ENCODE measurements at regions of chr1 and their contacts with region 1.

Region 1: DNA sequence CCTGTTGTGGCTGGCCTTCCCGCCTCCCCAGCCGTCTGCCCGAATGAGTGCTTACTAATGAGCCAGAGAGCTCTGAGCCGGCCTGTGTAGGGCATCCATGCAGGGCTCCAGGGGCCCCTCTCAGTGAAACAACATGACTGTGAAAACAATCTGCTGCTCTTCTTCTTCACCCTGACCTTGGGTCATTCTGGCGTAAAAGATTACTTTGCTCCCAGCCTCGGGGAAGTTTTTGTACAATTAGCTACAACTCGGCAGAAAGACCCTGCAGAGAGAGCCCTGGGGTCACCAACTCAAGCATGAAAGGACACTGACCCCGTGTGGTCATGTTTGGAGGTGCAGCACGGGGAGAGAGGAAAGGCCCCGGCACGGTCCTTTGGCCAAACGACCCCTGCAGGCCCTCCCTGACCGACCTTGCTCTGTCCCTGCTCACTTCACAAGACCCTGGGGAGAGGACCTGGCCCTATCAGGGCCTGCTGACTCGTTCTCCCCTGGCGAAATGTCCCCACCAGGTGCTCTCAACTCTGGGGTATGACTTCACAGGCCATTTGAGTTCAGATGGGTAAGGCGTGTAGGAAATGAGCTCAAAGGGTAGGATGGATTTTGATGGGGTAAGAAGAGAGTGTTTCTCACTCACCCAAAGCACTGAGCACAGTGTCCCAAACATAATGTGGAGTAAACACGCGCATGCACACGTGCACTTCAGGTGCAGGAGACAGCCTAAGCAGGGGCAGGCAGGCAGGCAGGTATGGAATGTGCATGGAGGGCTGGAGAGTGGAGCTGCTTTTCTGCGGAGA is 22.9 kb upstream of the FAM20B start:
- DNase-seq: peak; percentile 80
- H3K4me3 Mint-ChIP-seq: no peak overlapping the region
- H3K27ac Mint-ChIP-seq: peak overlapping the region; percentile 1
- H3K4me1 Mint-ChIP-seq: peaks cover 4% of the 10 kb centered on the region
- H3K27me3 Mint-ChIP-seq: no peaks in the 10 kb centered on the region
- CTCF ChIP-seq: peak; percentile 100

Region 2: DNA sequence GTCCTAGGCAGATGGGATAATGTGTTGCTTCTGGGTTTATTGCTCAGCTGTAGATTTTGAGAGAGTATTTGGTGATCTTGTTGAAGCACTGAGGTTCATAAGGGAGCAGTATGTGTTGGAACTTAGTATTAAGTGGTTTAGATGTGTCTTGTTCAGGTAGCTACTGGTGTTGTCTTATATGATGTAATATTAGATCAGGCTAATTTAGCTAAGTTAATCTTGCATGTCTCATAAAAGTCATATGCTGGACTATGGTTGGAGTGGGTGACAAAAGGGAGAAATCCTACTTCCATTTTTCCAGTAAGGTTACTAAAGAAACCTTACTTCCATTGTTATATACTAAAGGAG is 702.4 kb before region 1 on chr1:
- CTCF ChIA-PET with region 1: interaction called, 20 read pairs
- POLR2A ChIA-PET with region 1: no interaction called
- intact Hi-C with region 1: no loop called
- DNase-seq: no peak
- H3K4me3 Mint-ChIP-seq: no peak overlapping the region
- H3K27ac Mint-ChIP-seq: peak overlapping the region; percentile 50
- H3K4me1 Mint-ChIP-seq: peaks cover 15% of the 10 kb centered on the region
- H3K27me3 Mint-ChIP-seq: no peaks in the 10 kb centered on the region
- CTCF ChIP-seq: no peak

Region 3: DNA sequence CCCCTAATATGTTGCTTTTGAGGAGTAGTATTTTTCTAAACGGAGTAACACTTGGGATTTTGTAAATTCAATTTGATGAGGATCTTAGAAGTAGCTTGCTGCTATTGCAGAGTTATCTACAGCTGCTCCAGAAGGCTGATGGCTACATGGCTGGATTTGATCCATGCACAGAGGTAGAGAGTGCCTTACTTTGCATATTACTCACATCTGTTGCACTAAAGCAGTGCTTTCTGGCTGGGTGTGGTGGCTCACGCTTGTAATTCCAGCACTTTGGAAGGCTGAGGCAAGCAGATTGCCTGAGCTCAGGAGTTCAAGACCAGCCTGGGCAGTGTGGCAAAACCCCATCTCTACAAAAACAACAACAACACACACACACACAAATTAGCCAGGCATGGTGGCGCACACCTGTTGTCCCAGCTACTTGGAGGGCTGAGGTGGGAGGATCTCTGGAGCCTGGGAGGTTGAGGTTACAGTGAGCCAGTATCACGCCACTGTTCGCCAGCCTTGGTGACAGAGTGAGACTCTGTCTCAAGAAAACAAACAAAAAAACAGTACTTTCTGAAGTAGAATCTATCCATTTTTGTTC is 253.1 kb before region 1 on chr1:
- CTCF ChIA-PET with region 1: interaction called, 87 read pairs
- POLR2A ChIA-PET with region 1: no interaction called
- intact Hi-C with region 1: no loop called
- DNase-seq: no peak
- H3K4me3 Mint-ChIP-seq: no peak overlapping the region
- H3K27ac Mint-ChIP-seq: no peak overlapping the region
- H3K4me1 Mint-ChIP-seq: peaks cover 7% of the 10 kb centered on the region
- H3K27me3 Mint-ChIP-seq: no peaks in the 10 kb centered on the region
- CTCF ChIP-seq: no peak

Region 4: GRCh38 chr1:178789201-178789600 is 213.5 kb before region 1 on chr1:
- CTCF ChIA-PET with region 1: interaction called, 93 read pairs
- POLR2A ChIA-PET with region 1: no interaction called
- intact Hi-C with region 1: no loop called
- DNase-seq: no peak
- H3K4me3 Mint-ChIP-seq: no peak overlapping the region
- H3K27ac Mint-ChIP-seq: no peak overlapping the region
- H3K4me1 Mint-ChIP-seq: peaks cover 7% of the 10 kb centered on the region
- H3K27me3 Mint-ChIP-seq: no peaks in the 10 kb centered on the region
- CTCF ChIP-seq: no peak

Region 5: GRCh38 chr1:178869119-178869697 is 133.5 kb before region 1 on chr1:
- CTCF ChIA-PET with region 1: interaction called, 16 read pairs
- POLR2A ChIA-PET with region 1: no interaction called
- intact Hi-C with region 1: no loop called
- DNase-seq: peak; percentile 4
- H3K4me3 Mint-ChIP-seq: no peak overlapping the region
- H3K27ac Mint-ChIP-seq: no peak overlapping the region
- H3K4me1 Mint-ChIP-seq: no peaks in the 10 kb centered on the region
- H3K27me3 Mint-ChIP-seq: no peaks in the 10 kb centered on the region
- CTCF ChIP-seq: no peak

Region 6: DNA sequence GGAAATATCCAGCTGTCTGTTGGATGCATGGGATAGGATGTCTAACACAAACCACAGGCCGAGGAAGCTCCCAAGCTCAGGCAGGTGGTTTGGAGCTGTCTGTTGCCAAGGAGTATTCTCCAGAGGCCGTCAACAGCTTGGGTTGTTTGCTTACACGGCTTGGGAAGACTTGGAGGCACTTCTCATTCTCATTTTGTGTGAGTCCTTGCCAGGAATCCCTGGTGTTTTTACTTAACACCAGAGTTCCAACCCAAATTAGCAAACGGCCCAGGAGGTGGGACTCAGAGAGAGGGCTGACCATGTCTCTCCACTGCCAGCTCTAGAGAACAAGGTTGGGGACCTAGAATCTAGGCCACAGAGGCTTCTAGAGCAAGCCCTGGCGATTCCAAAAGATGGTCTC is 49.7 kb before region 1 on chr1:
- CTCF ChIA-PET with region 1: interaction called, 19 read pairs
- POLR2A ChIA-PET with region 1: no interaction called
- intact Hi-C with region 1: no loop called
- DNase-seq: no peak
- H3K4me3 Mint-ChIP-seq: no peak overlapping the region
- H3K27ac Mint-ChIP-seq: no peak overlapping the region
- H3K4me1 Mint-ChIP-seq: peaks cover 6% of the 10 kb centered on the region
- H3K27me3 Mint-ChIP-seq: no peaks in the 10 kb centered on the region
- CTCF ChIP-seq: no peak

Region 7: DNA sequence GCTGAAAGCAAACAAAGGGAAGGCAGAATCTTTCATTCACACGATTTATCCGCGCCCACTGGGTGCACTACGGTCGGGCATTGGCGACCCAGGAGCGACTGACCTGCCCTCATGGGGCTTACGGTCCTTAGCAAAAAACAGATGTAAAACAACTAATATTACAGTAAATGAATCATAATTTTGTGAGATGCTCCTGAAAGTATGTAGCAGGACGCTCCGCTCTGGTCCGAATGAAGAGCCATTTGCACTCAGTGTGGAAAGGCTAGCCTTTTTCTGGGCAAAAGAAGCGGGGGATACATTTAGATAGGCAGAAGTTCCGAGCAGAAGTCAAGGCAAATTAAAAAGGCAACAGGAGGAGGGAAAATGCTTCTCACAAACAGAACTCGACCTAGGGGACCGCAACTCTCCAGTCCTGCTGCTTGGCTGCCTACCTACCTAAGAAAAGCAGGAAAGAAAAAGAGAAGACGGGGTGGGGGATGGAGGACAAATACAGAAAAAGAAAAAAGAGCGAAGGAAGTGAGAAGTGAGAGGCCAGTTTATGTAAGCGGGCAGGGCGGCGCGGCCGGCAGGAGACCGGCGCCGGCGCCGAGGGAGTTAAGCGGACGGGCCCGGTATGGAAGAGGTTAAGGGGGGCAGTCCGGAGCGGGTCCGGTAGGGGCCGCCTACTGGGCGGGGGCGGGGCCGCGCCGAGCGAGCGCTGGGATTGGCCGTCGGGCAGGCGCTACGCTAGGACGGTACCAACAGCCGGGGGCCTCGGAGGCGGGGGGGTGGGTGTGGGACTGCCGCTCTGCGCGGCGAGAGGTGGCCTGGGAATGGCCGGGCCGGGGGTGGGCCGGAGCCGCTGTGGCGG is 22.6 kb after region 1 on chr1 and contains the start of gene FAM20B:
- CTCF ChIA-PET with region 1: interaction called, 21 read pairs
- POLR2A ChIA-PET with region 1: interaction called, 4 read pairs
- intact Hi-C with region 1: no loop called
- DNase-seq: peak; percentile 94
- H3K4me3 Mint-ChIP-seq: peak within 1 kb of the TSS; percentile 82
- H3K27ac Mint-ChIP-seq: peak within 1 kb of the TSS; percentile 68
- H3K4me1 Mint-ChIP-seq: peaks cover 31% of the 10 kb centered on the region
- H3K27me3 Mint-ChIP-seq: no peaks in the 10 kb centered on the region
- CTCF ChIP-seq: no peak
- total RNA-seq, gene FAM20B: 44.2 and 45.0 TPM in 2 replicates

Region 8: GRCh38 chr1:179298952-179299351 is 296.2 kb after region 1 on chr1:
- CTCF ChIA-PET with region 1: no interaction called
- POLR2A ChIA-PET with region 1: no interaction called
- intact Hi-C with region 1: no loop called
- DNase-seq: no peak
- H3K4me3 Mint-ChIP-seq: no peak overlapping the region
- H3K27ac Mint-ChIP-seq: no peak overlapping the region
- H3K4me1 Mint-ChIP-seq: peaks cover 40% of the 10 kb centered on the region
- H3K27me3 Mint-ChIP-seq: no peaks in the 10 kb centered on the region
- CTCF ChIP-seq: no peak

Region 9: GRCh38 chr1:179663810-179664209 is 661.1 kb after region 1 on chr1:
- CTCF ChIA-PET with region 1: no interaction called
- POLR2A ChIA-PET with region 1: no interaction called
- intact Hi-C with region 1: no loop called
- DNase-seq: no peak
- H3K4me3 Mint-ChIP-seq: no peak overlapping the region
- H3K27ac Mint-ChIP-seq: no peak overlapping the region
- H3K4me1 Mint-ChIP-seq: peaks cover 2% of the 10 kb centered on the region
- H3K27me3 Mint-ChIP-seq: peaks cover 16% of the 10 kb centered on the region
- CTCF ChIP-seq: no peak